ENCODE measurements at regions of chr1 and their contacts with region 1.

Region 1: GRCh38 chr1:32179443-32180185 is at the start of gene TXLNA:
- DNase-seq: peak; percentile 87 to 91 (median 88)
- H3K4me3 ChIP-seq: peak within 1 kb of the TSS; percentile 19 to 72
- H3K4me3 Mint-ChIP-seq: peak within 1 kb of the TSS; percentile 89 to 93 (median 92)
- H3K27ac ChIP-seq: peak within 1 kb of the TSS; percentile 83
- H3K27ac Mint-ChIP-seq: peak within 1 kb of the TSS; percentile 90 to 98 (median 96)
- H3K4me1 ChIP-seq: peaks cover 31% of the 10 kb centered on the region
- H3K4me1 Mint-ChIP-seq: peaks cover 24 to 53% (median 39%) of the 10 kb centered on the region in 4 donors
- H3K27me3 ChIP-seq: no peaks in the 10 kb centered on the region
- H3K27me3 Mint-ChIP-seq: no peaks in the 10 kb centered on the region
- total RNA-seq, gene TXLNA: 42.6 to 43.4 TPM

Region 2: GRCh38 chr1:31938174-31938950 is 241.3 kb before region 1 on chr1 and contains the start of gene PTP4A2:
- CTCF ChIA-PET with region 1: no interaction called
- POLR2A ChIA-PET with region 1: no interaction called
- intact Hi-C with region 1: no loop called
- DNase-seq: peak; percentile 79 to 89 (median 80)
- H3K4me3 ChIP-seq: peak within 1 kb of the TSS; percentile 43 to 95
- H3K4me3 Mint-ChIP-seq: peak within 1 kb of the TSS; percentile 92 to 100 (median 98)
- H3K27ac ChIP-seq: peak within 1 kb of the TSS; percentile 70
- H3K27ac Mint-ChIP-seq: peak within 1 kb of the TSS; percentile 96 to 98 (median 97)
- H3K4me1 ChIP-seq: peaks cover 77% of the 10 kb centered on the region
- H3K4me1 Mint-ChIP-seq: peaks cover 43 to 88% (median 62%) of the 10 kb centered on the region in 4 donors
- H3K27me3 ChIP-seq: no peaks in the 10 kb centered on the region
- H3K27me3 Mint-ChIP-seq: no peaks in the 10 kb centered on the region
- total RNA-seq, gene PTP4A2: 254 to 276 TPM

Region 3: DNA sequence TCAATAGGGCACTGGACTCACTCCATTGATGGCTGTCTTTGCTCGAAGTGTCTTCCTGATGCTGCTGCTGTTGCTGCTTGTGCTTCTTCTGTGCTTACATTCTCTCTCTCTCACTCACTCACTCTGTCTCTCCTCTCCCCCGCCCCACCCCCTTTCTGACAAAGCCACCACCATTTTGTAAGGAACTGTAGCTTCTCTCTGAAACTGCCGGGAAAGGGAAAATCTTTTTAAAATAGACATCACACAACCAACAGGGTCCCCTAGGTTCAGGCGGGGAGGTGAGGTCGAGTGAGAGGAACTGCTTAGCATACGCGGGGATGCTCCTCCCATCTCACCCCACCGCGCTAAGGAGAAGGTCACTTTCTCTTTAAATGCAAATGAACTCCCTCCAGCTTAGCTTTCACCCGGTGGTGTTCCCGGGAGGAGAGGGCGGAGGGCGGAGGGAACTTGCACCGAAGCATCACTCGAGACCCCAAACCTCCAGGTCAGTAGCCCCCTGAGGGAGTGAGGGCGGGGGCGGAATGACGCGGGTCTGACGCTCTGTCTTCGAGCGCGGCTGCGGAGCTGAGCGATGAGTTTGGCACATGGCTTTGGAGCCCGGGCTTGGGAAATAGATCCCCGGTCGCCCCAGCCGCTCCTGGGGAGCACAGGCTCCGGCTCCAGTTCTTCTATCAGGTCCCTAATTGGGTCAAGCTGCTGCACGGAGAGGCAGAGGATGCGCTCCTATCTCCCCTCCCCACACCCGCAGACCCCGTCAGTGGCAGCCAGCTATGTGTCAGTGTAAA is 20.8 kb after region 1 on chr1 and contains the start of gene CCDC28B:
- CTCF ChIA-PET with region 1: interaction called, 6 read pairs
- POLR2A ChIA-PET with region 1: interaction called, 58 read pairs
- intact Hi-C with region 1: loop called (anchors 1 kb)
- DNase-seq: peak; percentile 51 to 73 (median 58)
- H3K4me3 ChIP-seq: peak within 1 kb of the TSS; percentile 57 to 85
- H3K4me3 Mint-ChIP-seq: peak within 1 kb of the TSS; percentile 85 to 95 (median 92)
- H3K27ac ChIP-seq: peak within 1 kb of the TSS; percentile 84
- H3K27ac Mint-ChIP-seq: peak within 1 kb of the TSS; percentile 87 to 97 (median 95)
- H3K4me1 ChIP-seq: peaks cover 59% of the 10 kb centered on the region
- H3K4me1 Mint-ChIP-seq: peaks cover 38 to 76% (median 56%) of the 10 kb centered on the region in 4 donors
- H3K27me3 ChIP-seq: no peaks in the 10 kb centered on the region
- H3K27me3 Mint-ChIP-seq: no peaks in the 10 kb centered on the region
- total RNA-seq, gene CCDC28B: 4.2 to 5.1 TPM

Region 4: DNA sequence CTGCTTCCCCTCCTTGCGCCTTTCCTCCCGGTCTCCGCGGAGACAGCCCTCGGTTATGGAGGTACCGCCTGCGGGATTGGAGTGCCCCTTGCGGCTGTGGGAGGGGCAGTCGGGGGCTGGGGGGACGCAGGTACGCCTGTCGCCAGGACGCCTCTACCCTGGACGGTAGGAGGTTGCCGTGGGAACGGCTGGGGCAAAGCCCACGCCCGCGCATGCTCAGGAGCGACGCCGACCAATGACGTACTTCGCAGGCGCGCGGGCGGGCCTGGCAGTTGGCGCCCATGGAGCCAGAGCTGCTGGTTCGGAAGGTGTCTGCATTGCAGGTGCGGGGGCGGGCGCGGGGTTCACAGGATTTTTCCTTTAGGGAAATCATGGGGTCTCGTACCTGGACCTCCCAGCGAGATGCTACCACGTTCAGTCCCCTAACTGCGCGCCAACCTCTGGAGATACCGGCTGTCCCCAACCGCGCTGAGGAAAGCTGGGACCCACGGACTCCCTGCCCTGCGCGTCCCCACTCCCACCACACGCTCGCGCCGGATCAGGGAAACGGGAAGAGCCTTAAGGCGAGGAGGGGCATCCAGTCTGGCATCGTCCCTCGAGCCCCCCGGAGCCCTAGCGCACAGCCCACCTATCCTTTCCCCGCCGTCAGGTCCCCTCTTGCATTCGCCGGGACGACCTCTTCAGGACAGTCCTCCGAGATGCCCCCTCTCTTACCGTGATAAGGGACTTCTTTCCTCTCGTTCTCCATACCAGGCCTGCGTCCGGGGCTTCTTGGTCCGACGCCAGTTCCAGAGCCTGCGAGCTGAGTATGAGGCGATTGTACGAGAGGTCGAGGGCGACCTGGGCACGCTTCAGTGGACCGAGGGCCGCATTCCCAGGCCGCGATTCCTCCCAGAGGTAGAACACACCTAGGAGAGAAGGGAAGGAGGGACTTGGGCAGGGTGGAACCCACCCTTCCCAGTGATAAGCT is 26.1 kb after region 1 on chr1 and contains the start of gene IQCC:
- CTCF ChIA-PET with region 1: interaction called, 6 read pairs
- POLR2A ChIA-PET with region 1: interaction called, 58 read pairs
- intact Hi-C with region 1: loop called (anchors 1 kb)
- DNase-seq: peak; percentile 84 to 86 (median 86)
- H3K4me3 ChIP-seq: peak within 1 kb of the TSS; percentile 71 to 73
- H3K4me3 Mint-ChIP-seq: peak within 1 kb of the TSS; percentile 86 to 91 (median 89)
- H3K27ac ChIP-seq: peak within 1 kb of the TSS; percentile 63
- H3K27ac Mint-ChIP-seq: peak within 1 kb of the TSS; percentile 83 to 95 (median 92)
- H3K4me1 ChIP-seq: peaks cover 39% of the 10 kb centered on the region
- H3K4me1 Mint-ChIP-seq: peaks cover 15 to 48% (median 33%) of the 10 kb centered on the region in 4 donors
- H3K27me3 ChIP-seq: no peaks in the 10 kb centered on the region
- H3K27me3 Mint-ChIP-seq: no peaks in the 10 kb centered on the region
- total RNA-seq, gene IQCC: 2.7 TPM

Region 5: GRCh38 chr1:32394141-32394889 is 214.7 kb after region 1 on chr1 and contains the start of gene BSDC1:
- CTCF ChIA-PET with region 1: no interaction called
- POLR2A ChIA-PET with region 1: interaction called, 13 read pairs
- intact Hi-C with region 1: no loop called
- DNase-seq: peak; percentile 98 to 99 (median 99)
- H3K4me3 ChIP-seq: peak within 1 kb of the TSS; percentile 87
- H3K4me3 Mint-ChIP-seq: peak within 1 kb of the TSS; percentile 99 to 100 (median 100)
- H3K27ac ChIP-seq: peak within 1 kb of the TSS; percentile 95
- H3K27ac Mint-ChIP-seq: peak within 1 kb of the TSS; percentile 92 to 100 (median 100)
- H3K4me1 ChIP-seq: peaks cover 43% of the 10 kb centered on the region
- H3K4me1 Mint-ChIP-seq: peaks cover 5 to 25% (median 19%) of the 10 kb centered on the region in 4 donors
- H3K27me3 ChIP-seq: no peaks in the 10 kb centered on the region
- H3K27me3 Mint-ChIP-seq: peaks cover 0 to 1% of the 10 kb centered on the region in 2 donors
- total RNA-seq, gene BSDC1: 106 to 112 TPM

Measured in CD4-positive, alpha-beta memory T cell (primary cell).